Spleen (tissue), 13 donors: ENCODE measurements at regions of chr1 and their contacts with region 1.

Region 1: DNA sequence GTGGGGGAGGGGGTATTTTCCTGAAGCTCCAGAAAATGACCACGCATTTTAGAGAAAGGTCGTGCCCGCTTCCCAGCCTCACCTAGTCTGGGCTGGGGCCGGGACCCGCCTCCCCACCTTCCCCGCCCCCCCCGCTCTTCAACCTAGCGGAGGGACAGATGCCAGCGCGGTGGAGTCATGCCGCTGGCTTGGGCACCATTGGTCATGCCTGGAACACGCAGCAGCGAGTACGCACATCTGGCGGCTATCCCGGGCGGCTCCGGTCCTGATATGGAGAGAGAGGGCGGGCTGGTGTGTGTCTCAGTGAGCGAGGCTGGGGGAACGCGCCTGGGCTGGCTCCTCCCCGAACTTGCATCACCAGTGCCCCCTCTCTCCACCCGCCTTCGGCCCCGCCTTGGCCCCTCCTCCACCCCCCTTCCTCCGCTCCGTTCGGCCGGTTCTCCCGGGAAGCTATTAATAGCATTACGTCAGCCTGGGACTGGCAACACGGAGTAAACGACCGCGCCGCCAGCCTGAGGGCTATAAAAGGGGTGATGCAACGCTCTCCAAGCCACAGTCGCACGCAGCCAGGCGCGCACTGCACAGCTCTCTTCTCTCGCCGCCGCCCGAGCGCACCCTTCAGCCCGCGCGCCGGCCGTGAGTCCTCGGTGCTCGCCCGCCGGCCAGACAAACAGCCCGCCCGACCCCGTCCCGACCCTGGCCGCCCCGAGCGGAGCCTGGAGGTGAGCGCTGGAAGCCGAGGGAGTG is at the start of gene ATF3:
- DNase-seq: peak; percentile 93
- H3K4me3 ChIP-seq: peak within 1 kb of the TSS; percentile 62 to 92 (median 70)
- H3K27ac ChIP-seq: peak within 1 kb of the TSS; percentile 51 to 93 (median 89)
- H3K4me1 ChIP-seq: peaks cover 14 to 51% (median 35%) of the 10 kb centered on the region in 6 donors
- H3K27me3 ChIP-seq: peaks cover 5 to 76% (median 62%) of the 10 kb centered on the region in 7 donors
- CTCF ChIP-seq: no peak
- POLR2A ChIP-seq: peak; percentile 21 to 92 (median 90)
- total RNA-seq, gene ATF3: 1.4 to 31.8 (median 8.3) TPM

Region 2: DNA sequence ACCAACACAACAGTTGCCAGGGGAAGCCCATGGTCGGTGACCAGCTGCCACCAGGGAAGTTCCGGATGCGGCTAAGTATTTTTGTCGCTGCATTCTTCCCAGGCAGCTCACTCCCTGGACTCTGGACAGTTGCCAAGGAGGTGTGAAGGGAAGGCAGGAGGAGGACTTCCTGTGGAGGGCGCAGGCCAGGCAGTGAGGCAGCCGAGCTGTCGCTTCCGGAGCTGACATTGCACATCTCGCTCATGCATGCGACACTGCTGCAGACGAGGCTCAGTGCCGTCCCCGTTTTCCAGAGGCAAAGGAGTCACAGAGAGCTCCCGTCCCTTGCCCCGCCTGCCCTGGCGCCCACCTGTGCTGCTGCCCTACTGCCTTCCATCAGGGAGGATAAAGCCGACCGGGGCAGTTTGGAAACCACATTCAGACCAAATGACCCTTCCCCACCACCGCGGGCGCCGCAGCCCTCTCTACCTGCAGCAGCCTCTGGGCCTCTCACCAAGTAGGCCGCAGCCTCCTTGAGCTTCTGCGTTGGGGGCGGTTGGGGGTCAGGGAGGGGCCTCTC is 94.2 kb before region 1 on chr1:
- intact Hi-C with region 1: no loop called
- DNase-seq: no peak
- H3K4me3 ChIP-seq: peak overlapping the region in 5 of 8 donors; percentile 10 to 54 (median 23)
- H3K27ac ChIP-seq: no peak overlapping the region
- H3K4me1 ChIP-seq: peaks cover 8 to 23% (median 14%) of the 10 kb centered on the region in 6 donors
- H3K27me3 ChIP-seq: peaks cover 0 to 69% (median 40%) of the 10 kb centered on the region in 7 donors
- CTCF ChIP-seq: no peak
- POLR2A ChIP-seq: no peak

Region 3: DNA sequence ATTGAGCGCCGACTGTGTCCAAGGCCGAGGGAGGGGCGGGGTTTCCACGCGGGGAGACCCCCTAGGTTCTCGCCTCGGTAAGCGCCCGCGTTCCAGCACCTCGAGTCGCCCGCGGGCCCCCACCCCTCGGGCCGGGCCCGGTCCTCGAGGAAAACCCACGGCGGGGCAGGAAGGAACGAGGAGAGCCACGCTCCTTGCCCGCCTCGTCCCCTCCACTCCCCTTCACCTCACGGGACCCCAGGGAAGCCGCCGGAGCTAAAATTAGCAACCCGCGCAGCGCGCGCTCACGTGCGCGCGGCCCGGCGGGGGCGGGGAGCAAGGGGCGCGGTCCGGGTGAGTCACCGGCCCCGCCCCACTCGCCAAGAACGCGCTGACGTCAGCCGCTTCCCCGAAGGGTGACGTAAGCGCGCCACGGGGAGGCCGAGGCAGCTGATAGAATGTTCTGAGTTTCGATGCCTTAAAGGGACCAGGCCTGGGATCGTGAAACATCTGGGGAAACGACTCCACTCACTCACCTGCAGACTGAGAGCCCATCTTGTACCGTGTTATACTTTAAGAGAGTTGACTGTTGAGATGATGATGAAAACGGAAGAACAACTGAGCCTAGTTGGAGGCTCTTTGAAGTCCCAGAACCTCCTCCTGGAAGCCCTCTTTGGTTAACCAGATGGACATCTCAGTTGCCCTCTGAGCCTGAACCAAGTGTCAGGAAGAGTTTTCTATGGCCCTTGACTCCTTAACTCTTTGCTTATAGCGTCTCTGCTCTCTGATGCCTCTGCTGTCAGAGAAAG is 49.5 kb before region 1 on chr1:
- intact Hi-C with region 1: loop called (anchors 10 kb)
- DNase-seq: peak; percentile 97
- H3K4me3 ChIP-seq: peak overlapping the region; percentile 47 to 84 (median 60)
- H3K27ac ChIP-seq: peak overlapping the region; percentile 92 to 96 (median 94)
- H3K4me1 ChIP-seq: peaks cover 0 to 17% (median 8%) of the 10 kb centered on the region in 6 donors
- H3K27me3 ChIP-seq: no peaks in the 10 kb centered on the region
- CTCF ChIP-seq: peak in 1 of 11 experiments; percentile 6
- POLR2A ChIP-seq: no peak

Region 4: DNA sequence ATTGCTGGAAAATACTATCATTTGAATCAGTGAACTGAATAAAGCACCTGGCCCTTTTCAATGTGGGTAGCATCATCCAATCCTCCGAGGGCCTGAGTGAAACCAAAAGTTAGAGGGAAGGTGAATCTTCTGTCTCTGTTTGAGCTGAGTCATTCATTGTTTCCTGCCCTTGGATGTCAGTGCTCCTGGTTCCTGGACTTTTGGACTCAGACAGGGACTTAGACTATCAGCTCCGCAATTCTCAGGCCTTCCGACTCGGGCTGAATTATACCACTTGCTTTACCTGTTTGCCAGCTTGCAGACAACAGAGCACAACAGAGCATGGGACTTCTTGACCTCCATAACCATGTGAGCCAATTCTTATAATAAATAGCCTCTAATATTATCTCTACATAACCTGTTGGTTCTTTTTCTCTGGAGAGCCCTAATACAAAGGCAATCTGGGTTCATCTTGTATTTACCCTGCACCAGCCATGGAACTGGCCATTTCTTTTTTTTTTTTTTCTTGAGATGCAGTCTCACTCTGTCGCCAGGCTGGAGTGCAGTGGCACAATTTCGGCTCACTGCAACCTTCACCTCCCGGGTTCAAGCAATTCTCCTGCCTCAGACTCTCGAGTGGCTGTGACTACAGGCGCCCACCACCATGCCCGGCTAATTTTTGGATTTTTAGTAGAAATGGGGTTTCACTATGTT is 322.8 kb after region 1 on chr1:
- intact Hi-C with region 1: no loop called
- DNase-seq: no peak
- H3K4me3 ChIP-seq: no peak overlapping the region
- H3K27ac ChIP-seq: no peak overlapping the region
- H3K4me1 ChIP-seq: no peaks in the 10 kb centered on the region
- H3K27me3 ChIP-seq: no peaks in the 10 kb centered on the region
- CTCF ChIP-seq: no peak
- POLR2A ChIP-seq: no peak